Gastrocnemius medialis (tissue), 4 donors: ENCODE measurements at regions of chr6 and their contacts with region 1.

Region 1: DNA sequence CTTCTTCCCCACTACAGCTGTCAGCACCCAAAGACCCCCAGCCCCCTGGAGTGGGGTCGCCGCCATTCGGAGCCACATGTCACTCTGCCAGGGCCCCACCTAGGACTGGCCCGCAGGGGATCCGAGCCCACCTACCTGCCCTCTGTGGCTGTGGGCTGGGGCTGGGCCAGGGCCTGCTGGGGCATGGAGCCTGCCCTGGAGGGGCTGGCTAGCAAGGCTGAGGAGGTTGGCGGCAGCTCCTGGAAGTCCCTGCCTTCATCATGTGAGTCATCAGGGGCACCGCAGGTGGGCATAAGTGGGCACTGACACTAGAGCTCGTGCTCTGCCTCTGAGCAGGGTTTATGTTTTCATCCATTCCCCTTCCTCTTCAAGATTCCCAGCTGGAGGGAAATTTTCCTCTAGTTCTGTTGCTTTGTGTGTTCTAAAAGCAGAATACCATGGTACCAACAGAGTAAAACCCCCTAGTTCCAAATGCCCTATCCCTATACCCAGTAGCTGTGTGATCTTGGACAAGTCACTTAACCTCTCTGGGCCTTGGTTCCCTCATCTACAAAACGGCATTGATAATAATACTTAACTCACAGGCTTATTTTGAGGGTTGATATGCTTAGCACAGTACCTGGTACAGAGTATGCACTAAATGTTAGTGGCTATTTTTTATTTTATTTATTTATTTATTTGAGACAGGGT is 8.7 kb upstream of the FANCE start:
- DNase-seq: no peak
- ATAC-seq: no peak
- H3K4me3 ChIP-seq: no peak overlapping the region
- H3K27ac ChIP-seq: no peak overlapping the region
- H3K4me1 ChIP-seq: no peaks in the 10 kb centered on the region
- H3K27me3 ChIP-seq: no peaks in the 10 kb centered on the region
- CTCF ChIP-seq: no peak
- POLR2A ChIP-seq: no peak

Region 2: DNA sequence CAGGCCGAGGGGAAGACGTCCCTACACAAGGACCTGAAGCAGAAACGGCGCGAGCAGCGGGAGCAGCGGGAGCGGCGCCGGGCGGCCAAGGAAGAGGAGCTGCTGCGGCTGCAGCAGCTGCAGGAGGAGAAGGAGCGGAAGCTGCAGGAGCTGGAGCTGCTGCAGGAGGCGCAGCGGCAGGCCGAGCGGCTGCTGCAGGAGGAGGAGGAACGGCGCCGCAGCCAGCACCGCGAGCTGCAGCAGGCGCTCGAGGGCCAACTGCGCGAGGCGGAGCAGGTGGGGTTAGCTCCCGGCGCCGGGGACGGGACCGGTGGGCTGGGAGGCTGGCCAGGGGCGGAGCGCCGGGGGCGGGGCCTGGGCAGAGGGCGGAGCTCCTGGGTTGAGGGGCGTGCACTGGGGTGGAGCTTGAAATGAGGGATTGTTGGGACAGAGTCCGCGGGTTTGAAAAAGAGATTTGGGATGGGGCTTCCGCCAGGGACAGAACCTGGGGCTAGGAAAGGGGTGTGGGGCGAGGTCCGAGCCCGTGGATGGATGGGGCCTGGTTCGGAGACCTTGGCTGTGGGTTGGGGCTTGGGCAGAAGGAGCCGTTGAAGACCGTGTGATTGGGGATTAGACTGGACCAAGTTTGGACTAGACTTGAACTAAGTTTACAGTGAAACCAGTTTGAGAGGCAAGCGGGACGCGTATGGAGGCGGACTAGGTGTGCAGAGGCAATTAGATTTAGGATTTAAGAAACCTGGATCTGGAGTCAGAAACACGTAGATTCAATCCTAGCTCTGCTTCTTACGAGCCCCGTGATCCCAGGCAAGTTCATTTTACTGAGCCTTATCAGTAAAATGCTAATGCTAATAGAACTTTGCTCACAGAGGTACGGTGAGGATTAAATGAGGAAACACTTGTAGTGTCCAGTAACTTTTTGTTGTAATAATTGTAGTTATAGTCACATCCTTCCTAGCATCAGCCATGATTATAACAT is 125.0 kb before region 1 on chr6:
- in situ Hi-C with region 1: no loop called
- intact Hi-C with region 1: loop called (anchors 5 kb)
- DNase-seq: peak; percentile 56 to 78
- ATAC-seq: peak; percentile 91 to 94
- H3K4me3 ChIP-seq: peak overlapping the region; percentile 58 to 74 (median 68)
- H3K27ac ChIP-seq: peak overlapping the region; percentile 53 to 58 (median 54)
- H3K4me1 ChIP-seq: peaks cover 3 to 10% of the 10 kb centered on the region in 2 donors
- H3K27me3 ChIP-seq: no peaks in the 10 kb centered on the region
- CTCF ChIP-seq: peak in 2 of 5 experiments; percentile 14 to 20
- POLR2A ChIP-seq: peak in 1 of 2 donors; percentile 34